Lower leg skin (tissue), 4 donors: ENCODE measurements at regions of chr20 and their contacts with region 1.

Region 1: GRCh38 chr20:62065669-62066338 is at the start of gene TAF4:
- DNase-seq: peak; percentile 61 to 94
- H3K4me3 ChIP-seq: peak within 1 kb of the TSS; percentile 48
- CTCF ChIP-seq: no peak
- POLR2A ChIP-seq: peak in 1 of 2 donors; percentile 79
- total RNA-seq, gene TAF4: 21.1 to 40.6 (median 22.1) TPM

Region 2: DNA sequence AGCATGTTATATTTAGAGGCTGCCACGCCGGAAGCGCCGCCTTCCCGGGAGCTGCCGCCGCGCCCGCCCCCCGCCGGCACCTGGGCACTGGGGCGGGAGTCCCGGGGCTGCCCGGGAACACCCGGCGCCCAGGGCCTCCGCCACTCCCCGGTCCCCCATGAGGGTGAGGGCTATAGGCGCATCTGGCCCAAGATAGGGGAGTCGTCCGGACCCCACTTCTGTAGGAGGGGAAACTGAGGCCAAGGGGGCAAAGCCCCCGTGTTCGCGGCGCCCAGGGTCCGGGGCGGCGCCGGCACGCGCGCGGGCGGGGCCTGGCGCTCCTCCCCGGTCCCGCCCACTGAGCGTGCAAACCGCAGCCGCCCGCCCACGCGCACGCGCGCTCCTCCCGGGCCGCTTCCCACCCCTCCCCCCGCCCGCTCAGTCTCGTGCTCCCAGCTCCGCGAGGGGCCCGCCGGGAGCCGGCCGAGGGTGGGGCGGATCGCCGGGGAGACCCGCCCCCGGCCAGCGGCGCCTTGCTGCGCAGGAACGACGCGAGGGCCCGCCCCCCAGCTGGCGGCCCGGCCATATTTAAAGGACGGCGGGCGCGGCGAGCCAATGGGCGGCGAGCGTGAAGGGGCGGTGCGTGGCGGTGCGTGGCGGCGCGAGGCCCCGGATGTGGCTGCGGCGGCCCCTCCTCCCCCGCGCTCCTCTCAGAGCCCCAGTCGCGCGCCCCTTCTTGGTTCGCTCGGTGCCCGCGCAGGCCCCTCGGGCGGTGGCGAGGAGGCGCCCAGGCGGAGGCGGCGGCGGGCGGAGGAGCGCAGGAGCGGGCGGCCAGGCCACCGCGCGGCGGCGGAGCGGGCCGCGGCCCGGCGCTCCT is 56.2 kb after region 1 on chr20 and contains the start of gene LSM14B:
- intact Hi-C with region 1: loop called (anchors 5 kb)
- DNase-seq: peak; percentile 92 to 99
- H3K4me3 ChIP-seq: peak within 1 kb of the TSS; percentile 66
- CTCF ChIP-seq: no peak
- POLR2A ChIP-seq: no peak
- total RNA-seq, gene LSM14B: 44.9 to 60.3 (median 49.9) TPM

Region 3: DNA sequence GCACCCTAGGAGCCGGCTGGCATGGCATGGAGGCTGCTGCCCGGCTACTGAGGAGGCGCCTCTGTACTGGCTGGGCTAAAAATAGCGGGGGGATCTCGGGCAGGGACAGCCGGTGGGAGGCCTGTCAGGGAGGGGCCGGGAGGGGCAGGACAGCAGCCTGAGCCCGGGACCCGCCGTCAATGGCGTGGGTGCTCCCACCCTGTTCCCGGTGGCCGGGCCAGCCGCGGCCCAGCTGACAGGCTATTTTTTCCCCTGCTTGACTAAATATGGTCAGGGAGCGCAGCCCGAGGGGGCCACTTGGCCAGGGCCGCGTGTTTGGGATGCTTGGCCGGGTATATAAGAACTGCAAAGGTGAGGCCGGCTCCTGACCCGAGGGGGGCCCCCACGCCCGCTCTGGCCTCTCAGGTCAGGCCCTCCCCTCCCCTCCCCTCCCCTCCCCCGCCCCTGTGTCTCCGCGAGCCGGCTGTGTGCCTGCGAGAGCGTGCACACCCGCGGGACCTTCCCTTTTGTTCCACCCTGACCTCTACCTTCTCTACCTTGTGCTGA is 484.4 kb after region 1 on chr20:
- intact Hi-C with region 1: no loop called
- DNase-seq: no peak
- H3K4me3 ChIP-seq: no peak overlapping the region
- CTCF ChIP-seq: no peak
- POLR2A ChIP-seq: no peak